GM12878 (cell line): ENCODE measurements at regions of chr3 and their contacts with region 1.

Region 1: GRCh38 chr3:42101048-42101447 is 9.9 kb downstream of the TRAK1 start:
- DNase-seq: no peak
- ATAC-seq: no peak
- H3K4me3 ChIP-seq: no peak overlapping the region
- H3K27ac ChIP-seq: no peak overlapping the region
- H3K4me1 ChIP-seq: peaks cover 8% of the 10 kb centered on the region; the same call in 1 of the 2 replicates
- H3K27me3 ChIP-seq: no peaks in the 10 kb centered on the region
- CTCF ChIP-seq: no peak
- EP300 ChIP-seq: no peak
- POLR2A ChIP-seq: no peak
- RAD21 ChIP-seq: no peak

Region 2: DNA sequence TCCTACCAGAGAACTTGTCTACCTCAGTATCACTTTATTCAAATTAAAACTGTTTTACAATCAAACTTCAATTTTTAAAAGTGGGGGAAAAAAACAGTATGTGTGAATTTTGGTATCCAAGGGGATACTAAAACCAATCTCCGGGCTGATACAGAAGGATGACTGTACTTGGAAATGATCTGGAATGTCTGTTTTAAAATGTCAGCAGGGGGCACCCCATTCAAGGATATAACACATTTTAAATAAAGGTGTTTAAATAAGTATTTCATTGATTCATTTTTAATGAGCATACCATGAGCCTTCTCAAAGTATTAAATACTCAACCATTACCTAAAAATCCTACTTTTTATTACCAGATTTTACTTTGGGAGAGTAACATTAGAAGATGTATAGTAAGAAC is 207.1 kb before region 1 on chr3:
- CTCF ChIA-PET with region 1: interaction called, 87 read pairs
- POLR2A ChIA-PET with region 1: no interaction called
- RAD21 ChIA-PET with region 1: interaction called, 15 read pairs
- SMC1A ChIA-PET with region 1: interaction called, 49 read pairs
- in situ Hi-C with region 1: loop called (anchors 5 kb)
- intact Hi-C with region 1: loop called (anchors 1 kb)
- DNase-seq: no peak
- ATAC-seq: no peak
- H3K4me3 ChIP-seq: no peak overlapping the region
- H3K27ac ChIP-seq: no peak overlapping the region
- H3K4me1 ChIP-seq: no peaks in the 10 kb centered on the region
- H3K27me3 ChIP-seq: no peaks in the 10 kb centered on the region
- CTCF ChIP-seq: peak; percentile 18 to 49 (median 34); a peak in 3 of 6 replicates
- EP300 ChIP-seq: no peak
- POLR2A ChIP-seq: no peak
- RAD21 ChIP-seq: peak; percentile 70

Region 3: DNA sequence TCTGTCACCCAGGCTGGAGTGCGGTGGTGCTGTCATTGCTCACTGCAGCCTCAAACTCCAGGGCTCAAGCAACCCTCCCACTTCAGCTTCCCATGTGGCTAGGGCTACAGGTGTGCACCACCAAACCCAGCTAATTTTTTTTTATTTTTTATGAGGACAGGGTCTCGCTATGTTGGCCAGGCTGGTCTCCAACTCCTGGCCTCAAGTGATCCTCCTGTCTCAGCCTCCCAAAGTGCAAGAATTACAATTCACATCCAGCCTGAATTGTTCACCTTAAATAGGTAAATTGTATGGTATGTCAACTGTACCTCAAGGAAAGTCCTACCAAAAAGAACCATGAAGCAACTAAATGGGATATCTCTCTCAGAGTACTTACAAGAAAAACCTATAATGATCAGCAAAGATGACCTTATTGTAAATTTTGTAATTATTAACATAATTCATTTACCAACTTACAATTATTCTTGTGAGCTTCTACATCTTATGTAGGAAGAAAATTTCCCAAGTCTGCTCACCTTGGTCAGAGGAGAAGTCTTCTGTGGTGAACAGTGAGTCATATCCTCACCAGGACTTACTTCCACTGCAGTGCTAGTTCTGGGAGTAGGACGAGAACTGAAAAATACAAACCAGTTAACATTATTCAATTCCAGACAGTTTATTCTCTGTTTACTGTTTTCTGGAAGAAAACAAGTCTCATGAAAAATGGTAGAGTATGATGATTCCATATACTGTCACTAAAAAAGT is 193.5 kb before region 1 on chr3:
- CTCF ChIA-PET with region 1: interaction called, 87 read pairs
- POLR2A ChIA-PET with region 1: no interaction called
- RAD21 ChIA-PET with region 1: interaction called, 4 read pairs
- SMC1A ChIA-PET with region 1: interaction called, 6 read pairs
- in situ Hi-C with region 1: no loop called
- intact Hi-C with region 1: no loop called
- DNase-seq: no peak
- ATAC-seq: no peak
- H3K4me3 ChIP-seq: no peak overlapping the region
- H3K27ac ChIP-seq: no peak overlapping the region
- H3K4me1 ChIP-seq: no peaks in the 10 kb centered on the region
- H3K27me3 ChIP-seq: no peaks in the 10 kb centered on the region
- CTCF ChIP-seq: no peak
- EP300 ChIP-seq: no peak
- POLR2A ChIP-seq: no peak
- RAD21 ChIP-seq: no peak

Region 4: DNA sequence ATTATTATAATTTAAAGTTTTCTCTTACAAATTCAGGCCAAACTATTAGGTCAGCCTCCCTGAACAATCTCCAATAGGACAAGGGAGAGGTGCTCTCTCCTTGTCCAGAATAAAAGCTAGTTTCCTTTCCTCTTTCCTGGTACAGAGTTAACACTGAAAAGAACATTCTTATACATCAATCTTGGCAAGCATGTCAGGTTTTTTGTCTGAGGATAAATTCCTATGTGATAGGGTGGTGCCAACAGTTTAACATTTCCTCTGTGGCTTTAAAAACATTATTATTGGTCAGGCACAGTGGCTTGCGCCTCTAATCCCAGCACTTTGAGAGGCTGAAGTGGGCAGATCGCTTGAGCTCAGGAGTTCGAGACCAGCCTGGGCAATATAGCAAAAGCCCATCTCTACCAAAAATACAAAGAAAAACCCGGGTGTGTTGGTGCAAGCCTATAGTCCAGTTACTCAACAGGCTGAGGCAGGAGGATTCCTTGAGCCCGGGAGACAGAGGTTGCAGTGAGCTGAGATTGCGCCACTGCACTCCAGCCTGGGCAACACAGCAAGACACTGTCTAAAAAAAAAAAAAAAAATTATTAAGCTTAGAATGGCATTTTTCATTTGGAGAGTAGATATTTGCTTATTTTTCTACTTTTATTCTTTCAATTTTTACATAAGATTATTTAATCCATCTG is 125.5 kb before region 1 on chr3:
- CTCF ChIA-PET with region 1: interaction called, 10 read pairs
- POLR2A ChIA-PET with region 1: no interaction called
- RAD21 ChIA-PET with region 1: interaction called, 3 read pairs
- SMC1A ChIA-PET with region 1: interaction called, 4 read pairs
- in situ Hi-C with region 1: no loop called
- intact Hi-C with region 1: no loop called
- DNase-seq: no peak
- ATAC-seq: no peak
- H3K4me3 ChIP-seq: no peak overlapping the region
- H3K27ac ChIP-seq: no peak overlapping the region
- H3K4me1 ChIP-seq: no peaks in the 10 kb centered on the region
- H3K27me3 ChIP-seq: no peaks in the 10 kb centered on the region
- CTCF ChIP-seq: no peak
- EP300 ChIP-seq: no peak
- POLR2A ChIP-seq: no peak
- RAD21 ChIP-seq: no peak

Region 5: GRCh38 chr3:42012935-42013690 is 87.9 kb before region 1 on chr3:
- CTCF ChIA-PET with region 1: interaction called, 36 read pairs
- POLR2A ChIA-PET with region 1: interaction called, 7 read pairs
- RAD21 ChIA-PET with region 1: interaction called, 34 read pairs
- SMC1A ChIA-PET with region 1: interaction called, 44 read pairs
- in situ Hi-C with region 1: no loop called
- intact Hi-C with region 1: loop called (anchors 2 kb)
- DNase-seq: peak; percentile 86
- ATAC-seq: peak; percentile 83
- H3K4me3 ChIP-seq: peak overlapping the region; percentile 99
- H3K27ac ChIP-seq: peak overlapping the region; percentile 93
- H3K4me1 ChIP-seq: peaks cover 16% of the 10 kb centered on the region
- H3K27me3 ChIP-seq: no peaks in the 10 kb centered on the region
- CTCF ChIP-seq: peak in 2 of 3 experiments; percentile 2 to 15; a peak in 1 of 6 replicates
- EP300 ChIP-seq: peak; percentile 69 to 78; a peak in 2 of 4 replicates
- POLR2A ChIP-seq: peak; percentile 88
- RAD21 ChIP-seq: no peak

Region 6: GRCh38 chr3:42052484-42053351 is 48.3 kb before region 1 on chr3:
- CTCF ChIA-PET with region 1: interaction called, 20 read pairs
- POLR2A ChIA-PET with region 1: no interaction called
- RAD21 ChIA-PET with region 1: interaction called, 5 read pairs
- SMC1A ChIA-PET with region 1: interaction called, 5 read pairs
- in situ Hi-C with region 1: no loop called
- intact Hi-C with region 1: no loop called
- DNase-seq: no peak
- ATAC-seq: no peak
- H3K4me3 ChIP-seq: no peak overlapping the region
- H3K27ac ChIP-seq: peak overlapping the region; percentile 57
- H3K4me1 ChIP-seq: peaks cover 38% of the 10 kb centered on the region
- H3K27me3 ChIP-seq: no peaks in the 10 kb centered on the region
- CTCF ChIP-seq: no peak
- EP300 ChIP-seq: no peak
- POLR2A ChIP-seq: no peak
- RAD21 ChIP-seq: no peak

Region 7: DNA sequence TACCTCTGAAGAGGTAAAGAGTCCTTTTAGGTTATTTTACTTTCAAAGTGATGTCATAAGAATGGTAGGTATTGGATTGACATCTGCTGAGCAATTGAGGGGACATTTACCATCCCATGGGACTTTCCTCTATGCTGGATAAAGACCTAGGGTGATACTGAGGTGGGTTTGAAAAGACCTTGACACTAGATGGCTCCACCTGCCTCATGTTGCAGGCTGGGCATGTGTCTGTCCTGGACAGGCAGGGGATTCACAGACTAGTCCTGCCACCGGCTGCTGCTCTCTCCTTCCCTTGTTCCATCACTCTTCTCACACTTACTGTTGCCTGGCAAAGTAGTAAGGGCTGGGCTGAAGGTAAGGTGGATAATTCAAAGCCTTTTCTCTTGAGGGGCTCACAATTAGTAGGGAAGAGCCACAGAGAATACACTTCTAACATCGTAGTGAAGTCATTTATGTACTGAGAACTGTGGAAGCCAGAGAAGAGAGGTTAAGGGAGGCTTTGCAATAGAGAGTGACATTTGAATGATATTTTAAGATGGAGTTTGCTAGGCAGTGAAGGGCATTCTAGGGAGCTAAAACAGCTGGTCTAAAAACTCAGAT is 17.8 kb after region 1 on chr3:
- CTCF ChIA-PET with region 1: interaction called, 12 read pairs
- POLR2A ChIA-PET with region 1: interaction called, 4 read pairs
- RAD21 ChIA-PET with region 1: no interaction called
- SMC1A ChIA-PET with region 1: interaction called, 7 read pairs
- in situ Hi-C with region 1: no loop called
- intact Hi-C with region 1: no loop called
- DNase-seq: peak; percentile 71
- ATAC-seq: peak; percentile 89
- H3K4me3 ChIP-seq: no peak overlapping the region
- H3K27ac ChIP-seq: peak overlapping the region; percentile 71
- H3K4me1 ChIP-seq: peaks cover 48% of the 10 kb centered on the region
- H3K27me3 ChIP-seq: no peaks in the 10 kb centered on the region
- CTCF ChIP-seq: peak; percentile 54 to 93 (median 75); a peak in 5 of 6 replicates
- EP300 ChIP-seq: no peak
- POLR2A ChIP-seq: no peak
- RAD21 ChIP-seq: peak; percentile 86

Region 8: DNA sequence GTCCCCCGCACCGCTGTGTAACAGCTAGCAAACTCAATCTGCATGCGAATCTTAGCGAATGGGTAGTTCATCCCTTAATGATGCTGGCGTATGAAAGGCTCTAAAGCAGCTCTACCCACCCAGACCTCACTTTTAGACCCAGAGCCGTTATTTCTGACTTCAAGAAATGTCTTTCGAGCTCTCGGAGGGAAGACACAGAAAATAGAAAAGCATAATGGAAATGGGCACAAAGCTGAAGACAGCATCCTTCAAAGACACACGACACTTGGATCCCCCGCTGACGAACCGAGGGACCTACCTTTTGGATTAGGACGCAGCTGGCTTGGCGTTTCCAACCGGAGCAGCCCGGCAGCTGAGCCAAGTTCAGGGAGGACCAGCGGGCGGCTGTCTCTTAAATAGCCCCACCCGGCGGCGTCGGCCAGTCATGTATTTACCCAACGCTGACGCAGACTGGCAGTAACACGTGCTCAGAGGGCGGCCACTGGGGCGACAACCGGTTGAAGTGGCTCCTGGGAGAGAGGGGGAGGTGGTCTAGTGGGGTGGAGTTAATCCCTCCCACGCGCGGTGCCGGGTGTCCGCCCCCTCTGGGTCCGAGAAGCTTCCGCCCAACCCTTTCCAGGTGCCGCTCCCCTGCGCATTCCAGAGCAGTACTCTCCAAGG is 163.5 kb after region 1 on chr3:
- CTCF ChIA-PET with region 1: no interaction called
- POLR2A ChIA-PET with region 1: no interaction called
- RAD21 ChIA-PET with region 1: no interaction called
- SMC1A ChIA-PET with region 1: no interaction called
- in situ Hi-C with region 1: no loop called
- intact Hi-C with region 1: no loop called
- DNase-seq: no peak
- ATAC-seq: no peak
- H3K4me3 ChIP-seq: no peak overlapping the region
- H3K27ac ChIP-seq: no peak overlapping the region
- H3K4me1 ChIP-seq: no peaks in the 10 kb centered on the region
- H3K27me3 ChIP-seq: peaks cover 3 to 18% of the 10 kb centered on the region in 2 experiments; a peak in 3 of 4 replicates
- CTCF ChIP-seq: no peak
- EP300 ChIP-seq: no peak
- POLR2A ChIP-seq: no peak
- RAD21 ChIP-seq: no peak